WTC11 (cell line): ENCODE measurements at regions of chr6 and their contacts with region 1.

Region 1: DNA sequence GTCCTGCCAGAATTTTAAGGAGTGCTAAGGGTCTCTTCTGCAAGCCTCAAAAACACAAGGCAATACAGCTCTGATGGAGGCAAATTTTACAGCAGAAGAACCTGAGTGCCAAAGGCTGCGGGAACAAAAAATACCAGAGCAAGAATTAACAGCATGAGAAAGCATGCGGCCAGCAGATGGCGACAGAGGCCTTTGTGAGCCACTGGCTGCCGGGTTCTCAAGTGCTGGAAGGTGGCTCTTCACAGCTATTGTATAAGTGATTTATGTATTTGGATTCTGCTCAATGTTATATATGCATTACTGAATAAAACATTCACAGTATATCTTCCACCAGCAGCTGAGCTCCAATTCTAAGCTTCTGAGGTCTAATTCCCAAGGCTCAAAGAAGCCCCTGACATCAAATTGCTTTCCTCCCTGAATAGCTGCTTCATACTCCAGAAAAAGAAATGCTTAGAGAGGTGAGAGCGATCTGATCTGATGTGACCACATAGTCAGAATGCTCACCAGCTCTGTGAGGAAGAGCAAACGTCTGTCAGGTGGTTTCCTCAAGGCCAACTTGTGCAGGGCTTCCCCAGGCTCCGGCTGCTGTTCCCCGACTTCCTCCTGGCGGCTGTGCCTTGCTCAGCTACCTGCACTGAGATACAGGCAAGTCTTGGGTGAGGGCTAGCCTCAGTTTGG is 58.6 kb downstream of the PPP1R3G start:
- DNase-seq: peak; percentile 86
- ATAC-seq: peak; percentile 55
- H3K4me3 Mint-ChIP-seq: no peak overlapping the region
- H3K27ac Mint-ChIP-seq: peak overlapping the region; percentile 93
- H3K4me1 Mint-ChIP-seq: peaks cover 17% of the 10 kb centered on the region
- H3K27me3 Mint-ChIP-seq: peaks cover 2% of the 10 kb centered on the region; the same call in 1 of the 2 replicates
- CTCF ChIP-seq: peak; percentile 76

Region 2: GRCh38 chr6:5050009-5050408 is 93.8 kb before region 1 on chr6:
- CTCF ChIA-PET with region 1: no interaction called
- POLR2A ChIA-PET with region 1: no interaction called
- DNase-seq: no peak
- ATAC-seq: no peak
- H3K4me3 Mint-ChIP-seq: no peak overlapping the region
- H3K27ac Mint-ChIP-seq: no peak overlapping the region
- H3K4me1 Mint-ChIP-seq: peaks cover 9% of the 10 kb centered on the region
- H3K27me3 Mint-ChIP-seq: peaks cover 4% of the 10 kb centered on the region
- CTCF ChIP-seq: no peak

Region 3: DNA sequence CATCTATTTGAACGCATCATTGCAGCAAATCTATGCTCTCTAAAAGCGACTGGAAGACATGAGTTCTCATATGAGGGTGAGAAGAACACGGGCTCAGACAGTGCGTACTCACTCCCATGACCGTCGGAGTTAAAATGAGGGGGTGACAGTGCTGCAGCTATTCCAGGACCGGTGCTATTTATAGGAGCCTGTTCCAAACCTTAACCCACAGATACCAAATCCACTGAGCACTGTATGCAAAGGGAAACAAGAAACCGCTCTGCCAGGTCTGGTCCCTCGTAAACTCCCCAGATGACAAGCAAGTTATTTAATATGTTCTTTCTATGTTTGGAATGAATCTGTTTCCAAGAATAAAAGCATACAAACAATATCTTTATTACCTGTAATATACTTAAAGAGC is 35.7 kb before region 1 on chr6:
- CTCF ChIA-PET with region 1: interaction called, 11 read pairs
- POLR2A ChIA-PET with region 1: no interaction called
- DNase-seq: no peak
- ATAC-seq: no peak
- H3K4me3 Mint-ChIP-seq: no peak overlapping the region
- H3K27ac Mint-ChIP-seq: no peak overlapping the region
- H3K4me1 Mint-ChIP-seq: peaks cover 17% of the 10 kb centered on the region
- H3K27me3 Mint-ChIP-seq: no peaks in the 10 kb centered on the region
- CTCF ChIP-seq: no peak

Region 4: GRCh38 chr6:5159148-5159547 is 15.4 kb after region 1 on chr6:
- CTCF ChIA-PET with region 1: interaction called, 20 read pairs
- POLR2A ChIA-PET with region 1: no interaction called
- DNase-seq: no peak
- ATAC-seq: no peak
- H3K4me3 Mint-ChIP-seq: no peak overlapping the region
- H3K27ac Mint-ChIP-seq: no peak overlapping the region
- H3K4me1 Mint-ChIP-seq: peaks cover 9% of the 10 kb centered on the region
- H3K27me3 Mint-ChIP-seq: no peaks in the 10 kb centered on the region; the same call in 1 of the 2 replicates
- CTCF ChIP-seq: no peak

Region 5: GRCh38 chr6:5174244-5174643 is 30.5 kb after region 1 on chr6:
- CTCF ChIA-PET with region 1: interaction called, 45 read pairs
- POLR2A ChIA-PET with region 1: no interaction called
- DNase-seq: no peak
- ATAC-seq: no peak
- H3K4me3 Mint-ChIP-seq: no peak overlapping the region
- H3K27ac Mint-ChIP-seq: peak overlapping the region; percentile 70; the same call in 1 of the 2 replicates
- H3K4me1 Mint-ChIP-seq: peaks cover 29% of the 10 kb centered on the region
- H3K27me3 Mint-ChIP-seq: no peaks in the 10 kb centered on the region
- CTCF ChIP-seq: no peak

Region 6: DNA sequence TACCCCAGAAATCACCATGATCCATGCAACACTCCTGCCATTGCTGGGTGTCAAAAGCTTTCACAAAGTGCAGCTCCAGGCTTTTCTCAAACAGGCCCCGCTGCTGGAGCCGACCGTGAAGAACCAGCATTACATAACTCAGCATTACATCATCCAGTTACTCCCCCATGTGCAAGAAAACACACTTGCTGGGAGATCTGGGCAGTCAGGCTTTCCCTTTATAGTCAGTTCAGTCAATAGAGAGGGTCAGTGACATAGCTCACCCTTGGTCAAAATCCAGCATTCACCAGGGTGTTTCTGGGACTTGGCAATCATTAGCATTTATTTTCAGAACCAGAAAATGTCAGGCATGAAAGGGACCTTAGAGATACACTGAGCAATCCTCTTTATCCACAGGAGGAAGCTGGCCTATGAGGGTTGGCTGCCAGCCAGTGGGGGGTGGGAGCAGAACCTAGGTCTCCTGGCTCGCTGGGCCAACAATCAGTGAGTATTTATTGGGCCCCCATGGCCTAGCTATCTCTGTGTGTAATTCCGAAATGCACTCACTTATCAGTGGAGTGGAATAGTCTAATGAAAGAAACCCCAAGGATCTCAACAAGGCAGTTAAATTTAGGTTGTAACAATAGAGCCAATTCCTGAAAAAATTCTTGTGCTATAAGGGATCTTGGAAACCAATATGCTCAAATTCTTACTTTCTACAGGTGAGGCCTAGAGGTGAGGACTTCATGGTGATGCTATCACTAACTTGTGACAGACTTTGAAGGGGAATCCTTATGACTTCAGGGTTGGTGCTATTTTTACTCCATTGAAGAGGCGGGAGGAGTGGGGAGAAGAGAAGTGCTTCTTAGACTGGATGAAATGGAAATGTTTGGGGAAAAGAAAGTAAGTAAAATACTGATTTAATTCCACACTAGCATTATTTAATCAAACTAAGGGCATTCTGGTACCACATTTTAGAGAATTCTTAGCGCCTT is 62.4 kb after region 1 on chr6:
- CTCF ChIA-PET with region 1: interaction called, 12 read pairs
- POLR2A ChIA-PET with region 1: no interaction called
- DNase-seq: no peak
- ATAC-seq: no peak
- H3K4me3 Mint-ChIP-seq: no peak overlapping the region
- H3K27ac Mint-ChIP-seq: no peak overlapping the region
- H3K4me1 Mint-ChIP-seq: peaks cover 27% of the 10 kb centered on the region
- H3K27me3 Mint-ChIP-seq: no peaks in the 10 kb centered on the region
- CTCF ChIP-seq: no peak

Region 7: DNA sequence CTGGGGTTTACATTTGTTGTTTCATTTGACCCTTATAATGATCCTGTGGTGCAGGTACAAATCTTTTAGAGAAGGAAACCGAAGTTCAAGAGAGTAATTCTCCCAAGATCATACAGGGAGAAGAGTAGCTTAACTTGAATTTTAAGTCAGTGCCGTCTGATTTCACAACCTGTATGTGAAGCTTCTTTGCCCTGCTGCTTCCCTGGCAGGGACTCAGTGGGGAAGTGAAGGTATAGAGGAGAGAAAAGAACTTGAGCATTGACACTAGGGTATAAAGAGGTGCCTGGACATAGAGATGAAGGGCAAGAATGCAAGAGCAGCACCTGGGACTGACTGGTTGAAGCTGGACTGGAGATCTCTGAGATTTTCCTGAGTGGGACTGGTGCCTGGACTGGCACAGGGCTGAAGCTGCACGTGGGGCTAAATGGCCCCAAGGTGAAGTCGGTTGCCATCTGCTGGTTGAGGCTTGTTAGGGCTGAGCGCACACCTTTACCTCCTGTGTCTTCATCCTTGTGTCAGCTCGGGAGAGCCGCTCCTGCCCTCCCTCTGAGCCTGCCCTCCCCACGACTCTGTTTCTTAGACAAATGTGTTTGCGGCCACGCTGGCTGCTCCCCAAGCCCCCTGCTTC is 159.3 kb after region 1 on chr6:
- CTCF ChIA-PET with region 1: interaction called, 26 read pairs
- POLR2A ChIA-PET with region 1: no interaction called
- DNase-seq: peak; percentile 71
- ATAC-seq: peak; percentile 99
- H3K4me3 Mint-ChIP-seq: no peak overlapping the region
- H3K27ac Mint-ChIP-seq: no peak overlapping the region
- H3K4me1 Mint-ChIP-seq: peaks cover 15% of the 10 kb centered on the region
- H3K27me3 Mint-ChIP-seq: no peaks in the 10 kb centered on the region
- CTCF ChIP-seq: peak; percentile 39; the same call in 1 of the 2 replicates